Head of caudate nucleus (tissue), 42 donors: ENCODE measurements at regions of chr7 and their contacts with region 1.

Region 1: GRCh38 chr7:64183126-64183742 is 23.8 kb upstream of the ZNF735 start:
- DNase-seq: peak in 40 of 42 donors; percentile 4 to 84 (median 62)

Region 2: DNA sequence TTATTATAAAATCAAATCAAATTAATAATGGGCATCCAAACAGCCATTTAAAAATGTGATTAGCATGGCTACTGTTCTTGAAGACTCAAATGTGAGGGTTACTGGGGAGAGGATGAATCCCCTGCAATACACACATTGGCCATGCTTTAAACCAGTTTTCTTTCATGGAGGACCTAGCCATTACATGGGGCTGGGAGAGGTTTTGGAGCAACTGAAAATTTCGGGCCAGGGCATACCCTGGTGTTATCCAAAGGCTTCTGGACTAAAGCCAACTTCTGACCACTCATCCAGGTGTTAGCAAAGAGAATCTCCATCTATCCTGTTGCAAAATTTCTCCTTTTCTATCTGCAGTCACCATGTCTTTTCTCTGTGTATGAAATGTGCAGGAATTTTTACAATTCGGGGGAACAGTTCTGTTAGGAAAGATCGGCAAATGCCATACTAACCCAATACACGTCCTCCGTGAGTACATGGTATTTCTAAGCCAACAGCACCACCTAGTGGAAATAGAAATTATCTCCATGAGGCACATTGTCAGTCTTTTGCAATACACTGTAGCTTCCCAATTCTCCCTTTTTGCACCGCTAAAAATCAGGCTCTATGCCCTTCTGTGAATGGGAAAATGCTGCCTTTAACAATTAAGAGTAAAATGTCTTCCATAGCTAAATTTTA is 435.7 kb after region 1 on chr7:
- intact Hi-C with region 1: loop called (anchors 10 kb)
- DNase-seq: peak in 18 of 42 donors; percentile 4 to 76 (median 24)